ENCODE measurements at regions of chr18 and their contacts with region 1.

Region 1: GRCh38 chr18:50786864-50787263 is 33.0 kb downstream of the MRO start:
- DNase-seq: no peak
- H3K4me3 ChIP-seq: no peak overlapping the region
- H3K4me3 Mint-ChIP-seq: no peak overlapping the region
- H3K27ac Mint-ChIP-seq: no peak overlapping the region
- H3K4me1 ChIP-seq: no peaks in the 10 kb centered on the region
- H3K4me1 Mint-ChIP-seq: peaks cover 11% of the 10 kb centered on the region
- H3K27me3 ChIP-seq: no peaks in the 10 kb centered on the region
- H3K27me3 Mint-ChIP-seq: no peaks in the 10 kb centered on the region
- CTCF ChIP-seq: no peak

Region 2: GRCh38 chr18:50507120-50507590 is 279.7 kb before region 1 on chr18:
- CTCF ChIA-PET with region 1: no interaction called
- POLR2A ChIA-PET with region 1: no interaction called
- intact Hi-C with region 1: loop called (anchors 1 kb)
- DNase-seq: peak; percentile 37 to 59
- H3K4me3 ChIP-seq: no peak overlapping the region
- H3K4me3 Mint-ChIP-seq: no peak overlapping the region
- H3K27ac Mint-ChIP-seq: no peak overlapping the region
- H3K4me1 ChIP-seq: no peaks in the 10 kb centered on the region
- H3K4me1 Mint-ChIP-seq: no peaks in the 10 kb centered on the region
- H3K27me3 ChIP-seq: no peaks in the 10 kb centered on the region
- H3K27me3 Mint-ChIP-seq: peaks cover under 1% of the 10 kb centered on the region
- CTCF ChIP-seq: peak; percentile 47 to 71

Region 3: DNA sequence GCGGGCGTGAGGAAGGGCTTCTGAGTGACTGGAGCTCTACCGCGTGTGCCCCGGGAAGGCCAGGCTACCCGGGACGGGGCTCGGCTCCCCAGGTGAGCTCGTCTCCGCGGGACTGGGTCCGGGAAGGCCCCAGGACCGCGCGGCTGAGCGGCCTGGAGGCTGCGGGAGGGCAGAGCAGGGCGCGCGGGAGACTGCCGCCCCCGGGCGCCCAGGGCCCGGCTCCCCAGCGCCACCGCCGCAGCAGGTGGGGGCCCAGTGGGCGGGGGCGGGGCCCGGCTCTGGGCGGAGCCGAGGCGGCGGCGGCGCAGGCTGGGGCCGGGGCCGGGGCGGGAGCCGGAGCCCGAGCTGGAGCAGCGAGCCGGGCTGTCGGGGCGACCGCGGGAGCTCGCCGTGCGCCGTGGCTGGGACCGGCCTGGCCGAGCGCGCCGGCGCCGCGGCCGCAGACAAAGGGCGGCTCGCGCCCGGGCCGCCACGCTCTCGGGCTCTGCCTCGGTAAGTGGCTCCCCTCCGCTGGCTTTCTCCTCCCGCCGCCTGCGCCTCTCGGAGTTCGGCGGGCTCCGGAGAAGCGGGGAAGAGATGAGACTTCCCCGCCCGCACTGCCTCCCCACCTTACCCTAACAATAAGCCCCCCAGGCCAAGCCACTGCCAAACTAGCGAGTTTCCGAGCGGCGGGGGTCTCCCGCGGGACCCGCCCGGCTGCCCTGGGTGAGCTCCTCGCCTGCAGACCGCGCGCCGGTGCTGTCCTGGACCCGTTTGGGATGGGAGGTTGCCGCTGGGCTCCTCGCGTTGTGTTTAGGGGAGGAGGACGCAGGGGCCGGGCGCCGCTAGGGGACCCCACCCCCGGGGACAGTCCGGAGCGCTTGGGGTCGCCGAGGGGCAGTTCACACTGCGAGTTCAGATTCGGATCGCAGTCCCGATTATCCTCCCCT is 226.8 kb before region 1 on chr18 and contains the start of gene MAPK4:
- CTCF ChIA-PET with region 1: no interaction called
- POLR2A ChIA-PET with region 1: no interaction called
- intact Hi-C with region 1: loop called (anchors 2 kb)
- DNase-seq: peak in 1 of 2 experiments; percentile 52
- H3K4me3 ChIP-seq: peak within 1 kb of the TSS; percentile 40
- H3K4me3 Mint-ChIP-seq: peak within 1 kb of the TSS; percentile 59
- H3K27ac Mint-ChIP-seq: no peak within 1 kb of the TSS
- H3K4me1 ChIP-seq: no peaks in the 10 kb centered on the region
- H3K4me1 Mint-ChIP-seq: no peaks in the 10 kb centered on the region
- H3K27me3 ChIP-seq: no peaks in the 10 kb centered on the region; the same call in 1 of the 2 replicates
- H3K27me3 Mint-ChIP-seq: peaks cover 9% of the 10 kb centered on the region
- CTCF ChIP-seq: no peak
- total RNA-seq, gene MAPK4: 0.63 and 0.88 TPM in 2 replicates

Region 4: GRCh38 chr18:50662177-50662576 is 124.7 kb before region 1 on chr18:
- CTCF ChIA-PET with region 1: no interaction called
- POLR2A ChIA-PET with region 1: no interaction called
- intact Hi-C with region 1: loop called (anchors 1 kb)
- DNase-seq: peak in 1 of 2 experiments; percentile 2
- H3K4me3 ChIP-seq: no peak overlapping the region
- H3K4me3 Mint-ChIP-seq: no peak overlapping the region
- H3K27ac Mint-ChIP-seq: no peak overlapping the region
- H3K4me1 ChIP-seq: no peaks in the 10 kb centered on the region
- H3K4me1 Mint-ChIP-seq: no peaks in the 10 kb centered on the region
- H3K27me3 ChIP-seq: no peaks in the 10 kb centered on the region
- H3K27me3 Mint-ChIP-seq: no peaks in the 10 kb centered on the region
- CTCF ChIP-seq: peak; percentile 11 to 42

Region 5: GRCh38 chr18:50862401-50862800 is 75.5 kb after region 1 on chr18:
- CTCF ChIA-PET with region 1: no interaction called
- POLR2A ChIA-PET with region 1: no interaction called
- intact Hi-C with region 1: no loop called
- DNase-seq: no peak
- H3K4me3 ChIP-seq: no peak overlapping the region
- H3K4me3 Mint-ChIP-seq: no peak overlapping the region
- H3K27ac Mint-ChIP-seq: no peak overlapping the region
- H3K4me1 ChIP-seq: no peaks in the 10 kb centered on the region
- H3K4me1 Mint-ChIP-seq: no peaks in the 10 kb centered on the region
- H3K27me3 ChIP-seq: no peaks in the 10 kb centered on the region
- H3K27me3 Mint-ChIP-seq: peaks cover 2% of the 10 kb centered on the region
- CTCF ChIP-seq: no peak